K562 (cell line): ENCODE measurements at regions of chr7 and their contacts with region 1.

Region 1: GRCh38 chr7:80060218-80060806 is 74.3 kb upstream of the GNAI1 start:
- DNase-seq: peak in 1 of 4 experiments; percentile 27
- ATAC-seq: no peak
- H3K4me3 ChIP-seq: no peak overlapping the region
- H3K27ac ChIP-seq: no peak overlapping the region
- H3K4me1 ChIP-seq: no peaks in the 10 kb centered on the region
- H3K27me3 ChIP-seq: no peaks in the 10 kb centered on the region
- CTCF ChIP-seq: peak in 1 of 3 experiments; percentile 46; a peak in 2 of 6 replicates
- EP300 ChIP-seq: no peak
- POLR2A ChIP-seq: no peak
- RAD21 ChIP-seq: peak; percentile 11 to 57; a peak in 2 of 4 replicates

Region 2: DNA sequence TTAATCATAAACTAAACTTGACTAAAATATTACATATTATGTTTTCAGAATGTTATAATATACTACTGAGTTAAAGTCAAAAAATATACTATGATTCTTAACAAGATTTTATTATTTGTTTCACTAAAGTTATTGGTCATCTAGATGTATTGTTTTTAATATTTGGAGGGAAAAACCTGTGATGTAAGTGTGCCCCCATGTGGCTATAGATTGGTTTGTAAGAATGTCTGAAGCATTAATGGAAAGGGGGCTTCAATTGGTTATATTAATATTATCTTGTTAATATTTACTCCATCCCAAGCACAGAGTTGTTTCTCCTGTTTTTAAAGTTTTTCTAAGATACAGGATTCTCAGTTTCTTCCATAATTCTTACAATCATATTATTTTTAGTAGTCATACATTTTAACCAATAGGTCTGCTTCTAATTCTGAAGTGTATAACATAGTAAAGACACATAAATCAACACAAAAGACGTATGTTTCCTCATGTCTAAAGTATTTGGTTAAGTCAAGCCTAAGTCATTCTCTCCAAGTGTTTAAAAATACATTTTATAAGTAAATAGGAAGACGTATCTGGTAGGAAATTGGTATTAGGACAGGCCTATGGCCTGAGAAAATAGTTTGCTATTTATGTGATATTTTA is 393.5 kb after region 1 on chr7:
- CTCF ChIA-PET with region 1: no interaction called
- POLR2A ChIA-PET with region 1: no interaction called
- in situ Hi-C with region 1: no loop called
- intact Hi-C with region 1: loop called (anchors 2 kb)
- DNase-seq: peak in 1 of 4 experiments; percentile 7
- ATAC-seq: no peak
- H3K4me3 ChIP-seq: no peak overlapping the region
- H3K27ac ChIP-seq: no peak overlapping the region
- H3K4me1 ChIP-seq: no peaks in the 10 kb centered on the region
- H3K27me3 ChIP-seq: no peaks in the 10 kb centered on the region
- CTCF ChIP-seq: peak in 1 of 3 experiments; percentile 29; a peak in 1 of 6 replicates
- EP300 ChIP-seq: no peak
- POLR2A ChIP-seq: no peak
- RAD21 ChIP-seq: peak in 1 of 2 experiments; percentile 45; a peak in 2 of 4 replicates

Region 3: GRCh38 chr7:80659120-80660055 is 599.1 kb after region 1 on chr7:
- CTCF ChIA-PET with region 1: no interaction called
- POLR2A ChIA-PET with region 1: no interaction called
- in situ Hi-C with region 1: no loop called
- intact Hi-C with region 1: loop called (anchors 5 kb)
- DNase-seq: peak; percentile 18 to 29 (median 26)
- ATAC-seq: no peak
- H3K4me3 ChIP-seq: no peak overlapping the region
- H3K27ac ChIP-seq: no peak overlapping the region
- H3K4me1 ChIP-seq: no peaks in the 10 kb centered on the region
- H3K27me3 ChIP-seq: no peaks in the 10 kb centered on the region
- CTCF ChIP-seq: peak in 2 of 3 experiments; percentile 15 to 56; a peak in 4 of 6 replicates
- EP300 ChIP-seq: no peak
- POLR2A ChIP-seq: no peak
- RAD21 ChIP-seq: peak; percentile 34 to 54